ENCODE measurements at regions of chr1 and their contacts with region 1.

Region 1: DNA sequence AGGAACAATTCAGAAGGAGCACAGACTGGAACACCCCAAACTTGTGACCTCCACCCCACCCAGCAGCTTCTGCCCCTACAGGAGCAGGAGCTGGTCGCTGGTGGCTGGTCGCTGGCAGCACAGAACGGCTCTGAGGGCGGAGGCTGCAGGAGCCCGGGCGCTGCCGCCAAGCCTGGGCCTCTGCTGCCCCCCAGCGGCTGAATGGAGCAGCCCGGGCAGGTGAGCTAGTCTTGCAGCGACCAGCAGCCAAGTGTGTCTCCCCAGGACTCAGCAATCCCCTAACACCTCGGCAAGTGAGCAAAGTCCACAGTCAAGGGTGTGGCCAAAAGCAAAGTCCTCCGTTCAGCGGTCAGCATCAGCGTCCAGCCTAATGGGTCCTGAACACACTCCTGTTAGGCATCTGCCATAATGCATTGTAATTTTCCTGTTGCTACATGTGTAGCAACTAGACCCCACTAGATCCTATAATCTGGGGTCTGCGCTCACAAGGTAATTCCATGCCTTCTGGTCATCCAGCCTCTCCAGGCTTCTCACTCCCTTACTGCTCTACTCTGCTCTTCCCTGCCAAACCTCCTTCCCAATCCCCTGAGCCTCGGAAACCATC is 12.1 kb upstream of the GJB5 start:
- DNase-seq: peak; percentile 9 to 42 (median 37)
- H3K4me3 ChIP-seq: no peak overlapping the region
- H3K4me3 Mint-ChIP-seq: no peak overlapping the region
- H3K27ac ChIP-seq: no peak overlapping the region
- H3K27ac Mint-ChIP-seq: no peak overlapping the region
- H3K4me1 ChIP-seq: no peaks in the 10 kb centered on the region
- H3K4me1 Mint-ChIP-seq: peaks cover 3% of the 10 kb centered on the region
- H3K27me3 ChIP-seq: no peaks in the 10 kb centered on the region
- H3K27me3 Mint-ChIP-seq: peaks cover 2 to 8% (median 6%) of the 10 kb centered on the region in 3 donors
- CTCF ChIP-seq: peak; percentile 93

Region 2: GRCh38 chr1:33633019-33633801 is 1109.6 kb before region 1 on chr1:
- intact Hi-C with region 1: loop called (anchors 5 to 10 kb)
- DNase-seq: peak; percentile 60 to 71 (median 69)
- H3K4me3 ChIP-seq: no peak overlapping the region
- H3K4me3 Mint-ChIP-seq: peak overlapping the region in 1 of 2 donors; percentile 56
- H3K27ac ChIP-seq: no peak overlapping the region
- H3K27ac Mint-ChIP-seq: no peak overlapping the region
- H3K4me1 ChIP-seq: no peaks in the 10 kb centered on the region
- H3K4me1 Mint-ChIP-seq: peaks cover 2% of the 10 kb centered on the region
- H3K27me3 ChIP-seq: peaks cover 0 to 15% of the 10 kb centered on the region in 2 donors
- H3K27me3 Mint-ChIP-seq: peaks cover 7 to 24% (median 22%) of the 10 kb centered on the region in 3 donors
- CTCF ChIP-seq: peak; percentile 99

Region 3: GRCh38 chr1:34460193-34460592 is 282.6 kb before region 1 on chr1:
- intact Hi-C with region 1: loop called (anchors 2 to 5 kb)
- DNase-seq: peak; percentile 3 to 15 (median 6)
- H3K4me3 ChIP-seq: no peak overlapping the region
- H3K4me3 Mint-ChIP-seq: no peak overlapping the region
- H3K27ac ChIP-seq: no peak overlapping the region
- H3K27ac Mint-ChIP-seq: no peak overlapping the region
- H3K4me1 ChIP-seq: no peaks in the 10 kb centered on the region
- H3K4me1 Mint-ChIP-seq: no peaks in the 10 kb centered on the region
- H3K27me3 ChIP-seq: no peaks in the 10 kb centered on the region
- H3K27me3 Mint-ChIP-seq: peaks cover 1 to 5% (median 2%) of the 10 kb centered on the region in 3 donors
- CTCF ChIP-seq: peak; percentile 75

Region 4: GRCh38 chr1:34696185-34696584 is 46.6 kb before region 1 on chr1:
- intact Hi-C with region 1: no loop called
- DNase-seq: no peak
- H3K4me3 ChIP-seq: no peak overlapping the region
- H3K4me3 Mint-ChIP-seq: no peak overlapping the region
- H3K27ac ChIP-seq: no peak overlapping the region
- H3K27ac Mint-ChIP-seq: no peak overlapping the region
- H3K4me1 ChIP-seq: no peaks in the 10 kb centered on the region
- H3K4me1 Mint-ChIP-seq: no peaks in the 10 kb centered on the region
- H3K27me3 ChIP-seq: no peaks in the 10 kb centered on the region
- H3K27me3 Mint-ChIP-seq: peaks cover 1 to 4% (median 3%) of the 10 kb centered on the region in 3 donors
- CTCF ChIP-seq: no peak

Region 5: GRCh38 chr1:34859446-34860200 is 116.9 kb after region 1 on chr1 and contains the start of gene SMIM12:
- intact Hi-C with region 1: no loop called
- DNase-seq: peak; percentile 91 to 93 (median 92)
- H3K4me3 ChIP-seq: peak within 1 kb of the TSS; percentile 92 to 94 (median 93)
- H3K4me3 Mint-ChIP-seq: peak within 1 kb of the TSS; percentile 92 to 99
- H3K27ac ChIP-seq: peak within 1 kb of the TSS; percentile 74 to 90
- H3K27ac Mint-ChIP-seq: peak within 1 kb of the TSS; percentile 87 to 96 (median 93)
- H3K4me1 ChIP-seq: peaks cover 19 to 24% of the 10 kb centered on the region in 2 donors
- H3K4me1 Mint-ChIP-seq: peaks cover 29% of the 10 kb centered on the region
- H3K27me3 ChIP-seq: no peaks in the 10 kb centered on the region
- H3K27me3 Mint-ChIP-seq: peaks cover 3 to 5% (median 5%) of the 10 kb centered on the region in 3 donors
- CTCF ChIP-seq: peak; percentile 88
- polyA plus RNA-seq, gene SMIM12: 31.8 to 121 (median 93.7) TPM

Region 6: DNA sequence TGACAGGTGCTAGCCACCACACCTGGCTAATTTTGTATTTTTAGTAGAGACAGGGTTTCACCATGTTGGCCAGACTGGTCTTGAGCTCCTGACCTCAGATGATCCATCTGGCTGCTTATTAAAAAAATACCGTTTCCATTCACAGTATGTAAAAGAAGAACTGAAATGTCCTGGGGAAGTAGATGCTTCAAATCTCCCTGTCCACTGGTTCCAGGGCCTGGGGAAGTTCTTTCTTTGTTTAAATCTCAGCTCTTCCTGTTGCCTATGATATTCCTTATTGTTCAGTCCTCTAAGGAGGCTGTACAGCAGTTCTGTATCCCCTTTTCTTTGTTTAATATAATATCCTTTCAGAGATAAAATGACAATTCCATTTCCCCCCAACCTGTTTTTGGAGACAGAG is 383.8 kb after region 1 on chr1:
- intact Hi-C with region 1: no loop called
- DNase-seq: no peak
- H3K4me3 ChIP-seq: no peak overlapping the region
- H3K4me3 Mint-ChIP-seq: no peak overlapping the region
- H3K27ac ChIP-seq: no peak overlapping the region
- H3K27ac Mint-ChIP-seq: no peak overlapping the region
- H3K4me1 ChIP-seq: no peaks in the 10 kb centered on the region
- H3K4me1 Mint-ChIP-seq: no peaks in the 10 kb centered on the region
- H3K27me3 ChIP-seq: no peaks in the 10 kb centered on the region
- H3K27me3 Mint-ChIP-seq: peaks cover 0 to 11% (median 3%) of the 10 kb centered on the region in 3 donors
- CTCF ChIP-seq: no peak

Measured in CD14-positive monocyte (primary cell).